ENCODE measurements at regions of chr1 and their contacts with region 1.

Region 1: DNA sequence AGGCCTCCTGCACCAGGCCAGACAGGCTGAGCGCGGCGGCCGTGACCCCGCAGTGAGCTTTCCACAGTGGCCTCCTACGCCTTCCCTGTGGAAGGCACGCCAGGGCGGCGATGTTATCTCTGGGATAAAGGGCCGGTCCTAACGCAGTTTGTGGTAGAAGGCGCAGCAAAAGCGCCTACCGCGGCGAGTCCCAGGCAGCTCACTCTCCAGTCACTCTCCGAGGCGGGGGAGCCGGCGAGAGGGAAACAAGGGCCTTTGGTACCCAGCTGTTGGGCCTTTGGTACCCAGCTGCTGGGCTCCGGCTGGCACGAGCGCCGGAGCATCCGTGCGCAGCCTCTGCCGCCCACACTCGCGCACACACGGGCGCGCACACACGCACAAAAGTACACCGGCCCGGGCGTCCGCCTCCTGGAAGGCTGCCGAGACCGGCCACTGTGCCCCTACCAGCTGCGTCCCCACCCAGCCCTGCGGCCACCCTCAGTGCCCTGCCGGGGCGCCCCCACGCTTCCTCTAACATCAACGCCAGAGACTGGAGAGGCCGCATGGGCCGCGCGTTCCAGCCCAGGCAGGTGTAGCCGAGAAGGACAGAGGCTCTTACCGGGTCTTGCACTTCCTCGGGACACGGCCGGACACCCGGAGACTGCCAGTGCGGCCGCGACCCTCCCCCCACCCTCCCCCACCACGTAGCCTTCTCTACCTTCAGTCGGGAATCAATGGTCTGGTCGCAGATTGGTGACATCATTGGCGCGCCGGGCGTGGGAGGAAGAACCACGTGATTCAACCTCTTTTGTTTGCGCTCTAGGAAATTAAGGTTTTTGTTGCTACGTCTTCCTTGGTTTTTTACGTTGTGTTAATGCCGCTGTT is 19.5 kb upstream of the ADAR start:
- DNase-seq: peak in 1 of 2 experiments; percentile 97
- H3K4me3 ChIP-seq: peak overlapping the region; percentile 66 to 93 (median 90)
- H3K27ac ChIP-seq: peak overlapping the region; percentile 94
- H3K4me1 ChIP-seq: peaks cover 0 to 5% (median 1%) of the 10 kb centered on the region in 4 experiments; a peak in 2 of 7 replicates
- H3K27me3 ChIP-seq: no peaks in the 10 kb centered on the region
- CTCF ChIP-seq: no peak
- EP300 ChIP-seq: no peak; a peak in 1 of 3 replicates
- POLR2A ChIP-seq: peak; percentile 59 to 69
- RAD21 ChIP-seq: no peak

Region 2: GRCh38 chr1:154533952-154534844 is 93.3 kb before region 1 on chr1:
- CTCF ChIA-PET with region 1: no interaction called
- POLR2A ChIA-PET with region 1: no interaction called
- DNase-seq: peak in 1 of 2 experiments; percentile 62
- H3K4me3 ChIP-seq: no peak overlapping the region
- H3K27ac ChIP-seq: no peak overlapping the region
- H3K4me1 ChIP-seq: no peaks in the 10 kb centered on the region
- H3K27me3 ChIP-seq: no peaks in the 10 kb centered on the region
- CTCF ChIP-seq: peak; percentile 52 to 87 (median 80)
- EP300 ChIP-seq: peak in 1 of 2 experiments; percentile 39; a peak in 1 of 3 replicates
- POLR2A ChIP-seq: no peak
- RAD21 ChIP-seq: peak; percentile 83 to 84

Region 3: GRCh38 chr1:154607609-154608396 is 19.7 kb before region 1 on chr1 and contains the start of gene ADAR:
- CTCF ChIA-PET with region 1: interaction called, 7 read pairs
- POLR2A ChIA-PET with region 1: interaction called, 111 read pairs
- DNase-seq: peak in 1 of 2 experiments; percentile 69
- H3K4me3 ChIP-seq: peak within 1 kb of the TSS; percentile 65 to 96 (median 91)
- H3K27ac ChIP-seq: peak within 1 kb of the TSS; percentile 98
- H3K4me1 ChIP-seq: peaks cover 8 to 24% (median 15%) of the 10 kb centered on the region in 4 experiments; a peak in 6 of 7 replicates
- H3K27me3 ChIP-seq: no peaks in the 10 kb centered on the region
- CTCF ChIP-seq: no peak
- EP300 ChIP-seq: no peak
- POLR2A ChIP-seq: peak; percentile 76 to 81
- RAD21 ChIP-seq: no peak
- total RNA-seq, gene ADAR: 235 and 242 TPM in 2 replicates

Measured in H1 (cell line).